Heart left ventricle (tissue), 16 donors: ENCODE measurements at regions of chr15 and their contacts with region 1.

Region 1: GRCh38 chr15:58987489-58988005 is at the start of gene RNF111:
- DNase-seq: peak; percentile 89 to 93 (median 92)
- ATAC-seq: peak; percentile 94 to 98 (median 98)
- H3K4me3 ChIP-seq: peak within 1 kb of the TSS; percentile 55 to 99 (median 80)
- H3K27ac ChIP-seq: peak within 1 kb of the TSS; percentile 83 to 98 (median 91)
- H3K4me1 ChIP-seq: peaks cover 0 to 42% (median 12%) of the 10 kb centered on the region in 12 donors
- H3K27me3 ChIP-seq: no peaks in the 10 kb centered on the region
- CTCF ChIP-seq: no peak
- POLR2A ChIP-seq: peak in 1 of 2 donors; percentile 58
- total RNA-seq, gene RNF111: 11.1 to 29.1 (median 22.2) TPM

Region 2: GRCh38 chr15:59039225-59039624 is 51.7 kb after region 1 on chr15:
- intact Hi-C with region 1: loop called in 1 of 10 experiments (anchors 10 kb)
- DNase-seq: no peak
- ATAC-seq: no peak
- H3K4me3 ChIP-seq: no peak overlapping the region
- H3K27ac ChIP-seq: no peak overlapping the region
- H3K4me1 ChIP-seq: peaks cover 0 to 19% (median under 1%) of the 10 kb centered on the region in 12 donors
- H3K27me3 ChIP-seq: no peaks in the 10 kb centered on the region
- CTCF ChIP-seq: no peak
- POLR2A ChIP-seq: no peak

Region 3: DNA sequence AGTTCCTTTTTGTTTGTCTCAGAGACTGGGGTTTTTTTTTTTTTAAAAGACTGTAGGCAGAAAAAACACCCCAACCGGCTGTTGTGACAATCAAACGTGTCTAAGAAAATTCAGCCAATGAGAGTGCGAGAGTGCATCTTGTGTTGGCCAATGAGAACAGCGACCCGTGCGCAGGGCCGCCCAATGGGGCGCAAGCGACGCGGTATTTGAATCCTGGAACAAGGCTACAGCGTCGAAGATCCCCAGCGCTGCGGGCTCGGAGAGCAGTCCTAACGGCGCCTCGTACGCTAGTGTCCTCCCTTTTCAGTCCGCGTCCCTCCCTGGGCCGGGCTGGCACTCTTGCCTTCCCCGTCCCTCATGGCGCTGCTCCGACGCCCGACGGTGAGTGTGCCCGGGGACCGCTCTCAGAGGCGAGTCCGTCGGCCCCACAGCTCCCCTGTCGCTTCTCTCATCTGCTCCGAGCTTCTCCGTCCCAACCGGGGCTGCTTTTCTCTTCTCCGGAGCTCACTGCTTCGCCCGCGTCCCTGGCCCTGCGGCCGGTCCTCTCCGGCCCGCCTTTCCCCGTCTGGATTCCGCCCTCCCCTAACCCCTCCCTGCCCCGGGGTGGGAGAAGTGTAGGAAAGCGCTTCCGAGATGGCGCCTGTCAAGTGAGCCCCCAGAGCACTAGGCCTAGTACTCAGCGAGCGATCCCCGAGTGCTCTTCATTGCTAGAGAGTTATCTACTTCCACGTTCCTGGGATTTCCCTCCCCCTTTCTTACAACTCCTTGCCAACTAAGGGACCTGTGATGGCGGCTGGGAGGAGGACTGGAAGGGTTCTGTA is 117.6 kb after region 1 on chr15 and contains the start of gene CCNB2:
- intact Hi-C with region 1: loop called in 2 of 10 experiments (anchors 10 kb)
- DNase-seq: peak; percentile 83 to 89 (median 86)
- ATAC-seq: peak; percentile 99 to 100 (median 100)
- H3K4me3 ChIP-seq: peak within 1 kb of the TSS; percentile 21 to 79 (median 64)
- H3K27ac ChIP-seq: peak within 1 kb of the TSS in 1 of 12 donors; percentile 69
- H3K4me1 ChIP-seq: peaks cover 0 to 14% (median 5%) of the 10 kb centered on the region in 12 donors
- H3K27me3 ChIP-seq: no peaks in the 10 kb centered on the region
- CTCF ChIP-seq: no peak
- POLR2A ChIP-seq: peak in 1 of 2 donors; percentile 13
- total RNA-seq, gene CCNB2: 0.25 to 6.3 (median 0.66) TPM in 7 of 9 donors, not detected in the others

Region 4: DNA sequence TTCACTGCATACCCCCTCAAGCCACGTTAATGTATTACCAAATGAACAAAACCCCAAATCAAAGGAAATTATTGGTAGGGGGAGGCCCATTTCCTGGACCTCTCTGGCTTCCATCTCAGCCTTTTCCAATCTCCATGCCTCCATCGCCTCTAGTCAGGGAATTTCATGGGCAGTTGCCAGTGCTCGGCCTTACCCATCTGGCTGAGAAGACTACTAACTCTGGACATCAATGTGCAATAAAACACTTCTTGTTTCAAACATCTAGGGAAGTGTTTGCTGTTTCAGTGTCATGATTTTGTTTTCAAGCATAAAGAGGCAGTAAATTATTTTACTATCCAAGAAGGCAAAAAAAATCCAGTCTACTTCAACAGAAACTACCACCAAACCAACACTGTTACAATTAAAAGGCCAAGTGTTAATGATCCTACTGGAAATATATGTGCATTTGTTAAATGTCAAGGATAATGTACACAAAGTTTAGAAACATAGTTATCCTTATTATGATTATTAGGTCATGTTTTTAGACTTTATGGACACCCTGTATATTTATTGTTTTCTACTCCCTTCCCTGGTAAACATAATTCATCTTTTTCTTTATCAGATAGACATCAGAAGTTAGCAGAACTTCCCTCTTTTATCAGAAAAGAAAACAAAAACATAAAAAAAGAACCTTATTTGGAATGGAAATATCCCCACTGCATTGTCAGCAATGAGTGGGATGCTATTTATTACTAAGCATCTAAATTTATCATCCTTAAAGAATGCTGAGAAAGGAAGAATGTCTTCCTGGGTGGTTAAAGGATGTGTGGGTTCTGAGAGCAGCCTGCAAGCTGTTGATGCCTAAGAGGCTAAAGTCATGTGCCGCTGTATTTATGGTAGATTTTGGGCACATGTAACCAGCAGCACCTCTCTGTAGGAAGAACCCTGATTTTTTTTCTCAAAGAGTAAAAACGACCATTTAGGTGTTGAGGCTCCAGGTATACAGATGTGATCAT is 234.3 kb after region 1 on chr15:
- intact Hi-C with region 1: loop called in 1 of 10 experiments (anchors 10 kb)
- DNase-seq: no peak
- ATAC-seq: peak in 1 of 4 donors; percentile 38
- H3K4me3 ChIP-seq: no peak overlapping the region
- H3K27ac ChIP-seq: peak overlapping the region in 1 of 12 donors; percentile 15
- H3K4me1 ChIP-seq: peaks cover 0 to 39% (median 21%) of the 10 kb centered on the region in 12 donors
- H3K27me3 ChIP-seq: no peaks in the 10 kb centered on the region
- CTCF ChIP-seq: no peak
- POLR2A ChIP-seq: no peak

Region 5: GRCh38 chr15:59372352-59373211 is 385.0 kb after region 1 on chr15 and contains the start of gene MYO1E:
- intact Hi-C with region 1: loop called in 3 of 10 experiments (anchors 5 to 10 kb)
- DNase-seq: peak; percentile 88 to 93 (median 91)
- ATAC-seq: peak; percentile 98
- H3K4me3 ChIP-seq: peak within 1 kb of the TSS; percentile 54 to 99 (median 88)
- H3K27ac ChIP-seq: peak within 1 kb of the TSS; percentile 82 to 98 (median 93)
- H3K4me1 ChIP-seq: peaks cover 0 to 29% (median 9%) of the 10 kb centered on the region in 12 donors
- H3K27me3 ChIP-seq: no peaks in the 10 kb centered on the region
- CTCF ChIP-seq: no peak
- POLR2A ChIP-seq: peak; percentile 87 to 96
- total RNA-seq, gene MYO1E: 12.0 to 98.6 (median 28.2) TPM

Region 6: GRCh38 chr15:59437817-59438562 is 450.4 kb after region 1 on chr15 and contains the start of gene FAM81A:
- intact Hi-C with region 1: loop called in 1 of 10 experiments (anchors 5 kb)
- DNase-seq: peak; percentile 91 to 94 (median 91)
- ATAC-seq: peak; percentile 97 to 99 (median 99)
- H3K4me3 ChIP-seq: peak within 1 kb of the TSS; percentile 50 to 86 (median 60)
- H3K27ac ChIP-seq: peak within 1 kb of the TSS in 8 of 12 donors; percentile 24 to 53 (median 37)
- H3K4me1 ChIP-seq: peaks cover 0 to 21% (median 14%) of the 10 kb centered on the region in 12 donors
- H3K27me3 ChIP-seq: peaks cover 0 to 17% (median 0%) of the 10 kb centered on the region in 9 donors
- CTCF ChIP-seq: no peak
- POLR2A ChIP-seq: no peak
- total RNA-seq, gene FAM81A: 1.1 to 4.5 (median 3.2) TPM